ENCODE measurements at regions of chr2 and their contacts with region 1.

Region 1: GRCh38 chr2:30239308-30239985 is 8.1 kb downstream of the LBH start:
- DNase-seq: peak; percentile 71 to 85 (median 78)
- ATAC-seq: peak; percentile 59 to 76 (median 62)
- H3K4me3 ChIP-seq: peak overlapping the region in 8 of 12 donors; percentile 0 to 37 (median 6)
- H3K27ac ChIP-seq: peak overlapping the region; percentile 35 to 100 (median 78)
- H3K4me1 ChIP-seq: peaks cover 20 to 96% (median 84%) of the 10 kb centered on the region in 12 donors
- H3K27me3 ChIP-seq: no peaks in the 10 kb centered on the region
- CTCF ChIP-seq: peak; percentile 88 to 99 (median 97)
- POLR2A ChIP-seq: peak in 1 of 2 donors; percentile 24

Region 2: DNA sequence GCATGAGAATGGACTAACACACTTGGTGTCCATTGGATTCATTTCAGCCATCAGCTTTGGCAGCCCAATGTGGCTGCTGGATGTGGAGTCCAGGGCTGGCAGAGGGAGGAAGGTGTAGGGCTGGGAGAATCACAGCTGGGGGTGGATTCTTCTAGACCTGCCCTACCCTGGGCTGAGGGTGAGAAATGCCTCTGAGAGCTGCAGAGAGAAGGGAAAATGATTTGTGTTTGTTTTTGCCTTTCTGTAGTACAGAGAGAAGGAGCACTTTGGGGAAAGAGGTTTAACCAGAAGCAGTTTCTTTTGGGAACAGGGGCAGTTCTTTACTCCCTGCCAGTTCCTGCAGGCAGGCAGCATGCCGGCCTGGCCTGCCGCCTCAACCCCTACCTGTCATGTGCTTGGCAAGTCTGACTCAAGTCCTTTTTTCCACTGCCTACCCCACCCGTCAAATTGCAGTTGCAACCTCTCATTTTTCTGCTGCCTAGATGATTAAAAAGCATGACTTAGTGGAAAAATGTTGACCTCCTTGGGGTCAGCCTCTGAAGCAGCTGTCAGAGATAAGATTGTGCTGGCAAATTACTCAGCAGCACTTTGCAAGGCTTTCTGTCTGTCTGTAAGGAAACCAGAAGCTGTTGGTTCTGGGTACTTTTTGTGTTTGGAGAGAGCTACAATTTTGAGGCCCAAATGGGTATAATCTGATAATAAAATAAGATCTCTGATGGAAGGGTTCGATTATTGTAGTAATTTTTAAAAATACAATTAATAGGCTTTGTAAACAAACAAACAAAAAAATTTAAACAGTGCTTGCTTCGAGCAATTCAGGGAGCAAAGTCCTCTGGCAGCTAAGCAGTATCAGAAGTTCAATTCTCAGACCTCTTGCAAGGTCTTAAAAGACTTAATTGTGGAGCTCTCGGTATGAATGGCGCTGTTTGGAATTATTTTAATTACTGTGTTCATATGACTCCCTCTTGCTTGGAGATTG is 13.6 kb after region 1 on chr2:
- intact Hi-C with region 1: no loop called
- DNase-seq: peak; percentile 58 to 81 (median 73)
- ATAC-seq: peak; percentile 68 to 81 (median 76)
- H3K4me3 ChIP-seq: peak overlapping the region in 2 of 12 donors; percentile 7 to 19
- H3K27ac ChIP-seq: peak overlapping the region; percentile 40 to 89 (median 74)
- H3K4me1 ChIP-seq: peaks cover 17 to 100% (median 76%) of the 10 kb centered on the region in 12 donors
- H3K27me3 ChIP-seq: no peaks in the 10 kb centered on the region
- CTCF ChIP-seq: no peak
- POLR2A ChIP-seq: no peak

Region 3: DNA sequence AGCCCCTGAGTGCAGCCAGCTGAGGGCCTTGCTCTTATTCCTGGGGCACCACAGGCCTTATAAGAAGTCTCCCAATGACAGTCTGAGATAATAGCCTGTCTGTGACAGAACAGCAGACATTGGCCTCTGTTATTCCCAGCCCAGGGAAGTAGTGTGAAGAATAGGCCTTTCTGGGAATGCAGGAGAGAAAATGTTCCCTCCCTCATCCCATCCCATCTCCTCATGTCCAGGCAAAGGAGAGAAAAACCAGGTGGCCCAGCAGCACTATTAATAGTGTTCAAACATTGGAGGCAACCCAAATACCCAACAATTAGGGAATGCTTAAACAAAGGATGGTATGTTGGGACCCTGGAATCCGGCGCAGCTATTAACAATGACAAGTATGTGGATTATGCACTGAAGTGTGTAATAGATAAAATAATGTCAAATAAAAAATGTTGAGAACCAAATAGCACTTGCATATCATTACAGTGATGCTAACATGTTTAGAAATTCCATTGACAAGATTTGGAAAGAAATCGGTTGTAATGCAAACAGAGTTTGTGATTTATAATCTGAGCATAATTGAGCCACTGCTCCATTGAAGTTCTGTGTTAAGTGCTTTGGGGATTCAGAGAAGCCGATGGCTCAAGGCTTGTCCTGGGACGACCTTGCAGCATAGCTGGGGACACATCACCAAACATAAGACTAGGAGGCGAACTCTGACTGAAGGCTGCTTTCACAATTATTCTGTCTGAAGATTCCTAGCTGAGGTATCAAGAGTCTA is 61.2 kb after region 1 on chr2:
- intact Hi-C with region 1: loop called in 1 of 10 experiments (anchors 5 kb)
- DNase-seq: peak in 4 of 5 donors; percentile 32 to 52 (median 42)
- ATAC-seq: peak; percentile 77 to 91 (median 89)
- H3K4me3 ChIP-seq: peak overlapping the region in 7 of 12 donors; percentile 8 to 42 (median 34)
- H3K27ac ChIP-seq: peak overlapping the region; percentile 25 to 93 (median 83)
- H3K4me1 ChIP-seq: peaks cover 0 to 29% (median 17%) of the 10 kb centered on the region in 12 donors
- H3K27me3 ChIP-seq: no peaks in the 10 kb centered on the region
- CTCF ChIP-seq: no peak
- POLR2A ChIP-seq: no peak

Region 4: DNA sequence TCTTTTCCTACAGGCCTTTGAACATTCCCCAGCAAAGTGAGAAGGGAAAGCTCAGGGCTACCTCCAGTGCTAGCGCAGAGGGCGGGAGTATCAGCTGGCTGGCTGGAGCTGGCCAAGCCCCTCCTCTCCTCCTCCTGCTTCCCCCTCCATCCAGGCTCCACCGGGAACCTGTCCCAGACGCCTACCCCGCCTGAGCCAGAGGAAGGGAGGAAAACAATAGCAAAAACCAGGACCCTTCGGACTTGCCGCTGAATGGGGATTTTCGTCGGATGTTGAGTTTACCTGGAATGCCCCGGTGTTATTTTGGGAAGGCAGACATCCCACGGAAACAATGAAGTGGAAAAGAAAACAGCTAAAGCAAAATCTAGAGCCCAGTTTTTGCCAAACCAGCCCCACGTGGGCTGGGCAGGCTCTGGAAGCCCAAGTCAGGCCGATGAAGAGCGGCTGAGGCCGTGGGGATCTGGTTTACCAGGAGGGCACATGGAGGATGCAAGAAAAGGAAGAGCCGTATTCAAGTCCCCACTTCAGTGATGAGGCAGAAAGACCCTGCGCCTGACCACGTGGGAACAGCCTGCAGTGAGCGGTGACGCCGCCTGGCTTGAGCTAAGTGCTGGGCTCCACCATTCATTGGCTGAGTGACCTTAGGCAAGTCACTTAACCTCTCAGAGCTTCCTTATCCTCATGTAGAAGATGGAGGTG is 107.2 kb after region 1 on chr2:
- intact Hi-C with region 1: loop called in 7 of 10 experiments (anchors 2 to 5 kb)
- DNase-seq: peak; percentile 85 to 92 (median 88)
- ATAC-seq: peak; percentile 96 to 98 (median 96)
- H3K4me3 ChIP-seq: peak overlapping the region; percentile 5 to 63 (median 54)
- H3K27ac ChIP-seq: peak overlapping the region; percentile 69 to 96 (median 86)
- H3K4me1 ChIP-seq: peaks cover 8 to 55% (median 37%) of the 10 kb centered on the region in 12 donors
- H3K27me3 ChIP-seq: no peaks in the 10 kb centered on the region
- CTCF ChIP-seq: no peak
- POLR2A ChIP-seq: peak in 1 of 2 donors; percentile 69